PC-9 (cell line): ENCODE measurements at regions of chr2 and their contacts with region 1.

Region 1: GRCh38 chr2:236745420-236746197 is 176.0 kb downstream of the ACKR3 start:
- DNase-seq: peak; percentile 78 to 92
- H3K4me3 ChIP-seq: peak overlapping the region; percentile 8; the same call in 1 of the 2 replicates
- H3K27ac ChIP-seq: peak overlapping the region; percentile 99
- H3K4me1 ChIP-seq: peaks cover 58% of the 10 kb centered on the region
- H3K27me3 ChIP-seq: no peaks in the 10 kb centered on the region
- CTCF ChIP-seq: no peak

Region 2: DNA sequence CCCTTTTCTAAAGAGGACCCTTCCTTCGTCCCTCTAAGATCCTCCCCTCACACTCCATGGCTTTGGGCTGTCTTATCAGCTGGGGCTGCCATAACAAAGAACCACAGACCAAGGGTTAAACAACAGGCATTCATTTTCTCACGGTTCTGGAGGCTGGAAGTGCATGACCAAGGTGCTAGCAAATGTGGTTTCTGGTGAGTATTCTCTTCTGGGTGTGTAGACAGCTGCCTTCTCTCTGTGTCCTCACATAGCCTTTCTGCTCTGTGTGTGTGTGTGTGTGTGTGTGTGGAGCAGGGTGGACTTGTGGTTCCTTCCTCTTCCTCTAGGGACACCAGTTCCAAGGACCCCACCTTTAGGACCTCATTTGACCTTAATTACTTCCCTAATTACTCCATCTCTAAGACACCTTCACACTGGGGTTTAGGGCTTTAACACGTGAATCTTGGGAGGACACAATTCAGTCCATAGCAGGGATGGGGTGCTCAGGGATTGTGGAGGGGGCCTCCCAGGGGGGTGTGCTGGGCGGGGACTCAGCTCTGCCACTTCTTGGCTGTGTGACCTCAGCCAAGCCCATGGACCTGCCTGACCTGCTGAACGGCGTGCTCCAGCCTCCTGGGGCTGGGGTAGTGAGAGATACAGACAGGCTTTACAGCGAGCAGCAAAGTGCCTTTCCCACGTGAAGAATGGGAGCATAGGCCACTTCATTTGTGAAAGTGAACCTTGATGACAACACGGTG is 138.0 kb before region 1 on chr2:
- CTCF ChIA-PET with region 1: no interaction called
- POLR2A ChIA-PET with region 1: no interaction called
- intact Hi-C with region 1: loop called (anchors 5 kb)
- DNase-seq: peak; percentile 64 to 65
- H3K4me3 ChIP-seq: no peak overlapping the region
- H3K27ac ChIP-seq: no peak overlapping the region
- H3K4me1 ChIP-seq: peaks cover 18% of the 10 kb centered on the region
- H3K27me3 ChIP-seq: peaks cover 40% of the 10 kb centered on the region
- CTCF ChIP-seq: peak; percentile 56

Region 3: DNA sequence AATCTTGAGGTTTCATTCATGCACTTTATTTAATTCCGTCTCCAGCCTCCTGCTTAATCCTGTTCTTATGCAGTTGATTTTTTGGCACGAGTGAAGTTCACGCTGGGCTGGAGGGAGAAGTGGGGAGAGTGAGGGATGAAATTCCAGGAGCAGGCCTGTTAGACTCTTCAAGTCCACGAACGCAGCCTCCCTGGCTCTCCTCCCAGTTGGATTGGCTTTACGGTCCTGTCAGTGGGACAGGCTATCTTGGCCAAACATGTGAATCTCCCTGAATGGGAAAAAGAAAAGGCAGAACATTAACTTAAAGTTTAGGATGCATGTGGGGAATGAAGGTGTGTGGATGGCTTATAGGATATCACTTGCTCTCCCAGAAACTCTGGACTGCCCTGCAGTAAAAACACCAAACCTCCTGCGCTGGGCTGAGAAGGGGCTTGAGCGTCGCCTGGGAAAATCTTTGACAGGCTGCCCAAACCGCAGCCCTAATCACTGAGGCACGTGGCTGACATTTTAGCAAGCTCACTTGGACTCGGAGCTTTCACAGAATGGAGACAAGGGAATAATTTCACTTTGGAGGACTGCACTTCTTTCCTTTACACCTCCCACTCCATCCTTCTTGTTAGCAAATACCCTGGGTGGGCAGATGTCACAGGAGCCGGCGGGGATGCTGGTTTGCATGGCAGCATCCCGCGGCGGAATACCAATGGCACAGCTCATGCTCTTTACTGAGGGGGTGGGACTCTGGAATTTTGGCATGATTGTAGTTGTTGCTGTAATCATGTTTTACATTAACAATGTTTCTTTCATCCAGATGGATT is 82.1 kb before region 1 on chr2:
- CTCF ChIA-PET with region 1: no interaction called
- POLR2A ChIA-PET with region 1: no interaction called
- intact Hi-C with region 1: loop called (anchors 1 kb)
- DNase-seq: peak in 1 of 2 experiments; percentile 25
- H3K4me3 ChIP-seq: no peak overlapping the region
- H3K27ac ChIP-seq: no peak overlapping the region
- H3K4me1 ChIP-seq: peaks cover 29% of the 10 kb centered on the region
- H3K27me3 ChIP-seq: peaks cover 8% of the 10 kb centered on the region
- CTCF ChIP-seq: no peak

Region 4: GRCh38 chr2:236718207-236718992 is 27.2 kb before region 1 on chr2:
- CTCF ChIA-PET with region 1: no interaction called
- POLR2A ChIA-PET with region 1: interaction called, 3 read pairs
- intact Hi-C with region 1: loop called (anchors 2 kb)
- DNase-seq: peak in 1 of 2 experiments; percentile 20
- H3K4me3 ChIP-seq: no peak overlapping the region
- H3K27ac ChIP-seq: no peak overlapping the region
- H3K4me1 ChIP-seq: peaks cover 26% of the 10 kb centered on the region
- H3K27me3 ChIP-seq: peaks cover 12% of the 10 kb centered on the region; the same call in 1 of the 2 replicates
- CTCF ChIP-seq: no peak

Region 5: GRCh38 chr2:236769921-236770671 is 24.5 kb after region 1 on chr2:
- CTCF ChIA-PET with region 1: no interaction called
- POLR2A ChIA-PET with region 1: interaction called, 12 read pairs
- intact Hi-C with region 1: loop called (anchors 1 kb)
- DNase-seq: peak; percentile 93 to 95
- H3K4me3 ChIP-seq: no peak overlapping the region
- H3K27ac ChIP-seq: peak overlapping the region; percentile 92
- H3K4me1 ChIP-seq: peaks cover 22% of the 10 kb centered on the region
- H3K27me3 ChIP-seq: no peaks in the 10 kb centered on the region
- CTCF ChIP-seq: no peak

Region 6: GRCh38 chr2:236871500-236872001 is 125.9 kb after region 1 on chr2:
- CTCF ChIA-PET with region 1: no interaction called
- POLR2A ChIA-PET with region 1: no interaction called
- intact Hi-C with region 1: loop called (anchors 1 kb)
- DNase-seq: peak; percentile 40 to 97
- H3K4me3 ChIP-seq: no peak overlapping the region
- H3K27ac ChIP-seq: peak overlapping the region; percentile 76
- H3K4me1 ChIP-seq: peaks cover 42% of the 10 kb centered on the region
- H3K27me3 ChIP-seq: peaks cover 21% of the 10 kb centered on the region; the same call in 1 of the 2 replicates
- CTCF ChIP-seq: no peak